ENCODE measurements at regions of chr3 and their contacts with region 1.

Region 1: DNA sequence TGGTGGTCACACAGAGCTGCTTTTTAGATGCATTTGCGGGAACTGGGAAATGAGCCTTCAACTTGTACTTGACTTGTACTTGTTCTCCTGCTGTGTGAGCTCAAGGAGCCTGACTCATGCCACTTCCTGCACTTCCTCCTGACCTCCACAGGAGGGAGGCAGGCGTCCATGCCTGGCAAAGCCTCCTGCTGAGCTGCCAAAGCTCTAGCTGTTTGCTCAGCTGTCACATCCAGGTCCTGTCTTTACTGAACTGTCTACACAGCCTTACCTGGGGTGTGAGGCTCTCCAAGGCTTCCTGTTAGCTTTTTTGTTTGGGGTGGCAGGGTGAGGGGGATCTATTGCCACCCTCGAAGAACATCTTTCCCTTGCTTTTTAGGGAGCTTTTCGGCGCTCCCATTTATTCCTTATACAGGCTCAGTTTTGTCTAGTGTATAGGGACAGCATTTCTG is 6.4 kb downstream of the THPO start:
- DNase-seq: peak; percentile 85
- ATAC-seq: peak; percentile 98
- H3K4me3 ChIP-seq: no peak overlapping the region
- H3K27ac ChIP-seq: no peak overlapping the region
- H3K4me1 ChIP-seq: peaks cover 20% of the 10 kb centered on the region
- H3K27me3 ChIP-seq: no peaks in the 10 kb centered on the region
- CTCF ChIP-seq: peak; percentile 93

Region 2: DNA sequence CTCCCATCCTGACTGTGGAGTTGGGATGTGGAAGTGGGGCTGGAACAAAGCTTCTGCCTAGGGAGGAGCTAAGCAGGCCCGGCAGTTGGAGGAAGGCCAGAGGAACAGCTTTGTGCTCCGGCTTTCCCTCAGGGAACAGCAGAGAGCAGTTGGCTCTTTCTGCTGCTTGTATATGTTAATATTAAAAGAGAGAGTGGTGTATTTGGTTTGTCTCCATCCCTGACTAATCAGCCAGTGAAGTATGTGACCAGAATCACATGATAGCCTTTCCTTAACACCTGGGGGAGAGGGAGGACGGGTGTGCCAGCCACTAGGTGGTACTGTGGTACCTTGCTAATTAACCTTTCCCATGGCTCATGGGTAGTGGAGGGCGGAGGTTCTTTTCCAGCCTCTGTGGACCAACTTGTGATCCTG is 226.5 kb before region 1 on chr3:
- intact Hi-C with region 1: no loop called
- DNase-seq: peak; percentile 66
- ATAC-seq: peak; percentile 90
- H3K4me3 ChIP-seq: no peak overlapping the region
- H3K27ac ChIP-seq: no peak overlapping the region
- H3K4me1 ChIP-seq: no peaks in the 10 kb centered on the region
- H3K27me3 ChIP-seq: no peaks in the 10 kb centered on the region
- CTCF ChIP-seq: peak; percentile 45

Region 3: GRCh38 chr3:184405075-184406030 is 33.8 kb after region 1 on chr3:
- intact Hi-C with region 1: no loop called
- DNase-seq: no peak
- ATAC-seq: peak; percentile 4
- H3K4me3 ChIP-seq: no peak overlapping the region
- H3K27ac ChIP-seq: no peak overlapping the region
- H3K4me1 ChIP-seq: no peaks in the 10 kb centered on the region
- H3K27me3 ChIP-seq: peaks cover 27% of the 10 kb centered on the region
- CTCF ChIP-seq: no peak

Region 4: GRCh38 chr3:184513276-184514170 is 141.9 kb after region 1 on chr3:
- intact Hi-C with region 1: loop called (anchors 10 kb)
- DNase-seq: peak; percentile 90
- ATAC-seq: peak; percentile 98
- H3K4me3 ChIP-seq: peak overlapping the region; percentile 46
- H3K27ac ChIP-seq: no peak overlapping the region
- H3K4me1 ChIP-seq: peaks cover 5% of the 10 kb centered on the region
- H3K27me3 ChIP-seq: peaks cover 44% of the 10 kb centered on the region
- CTCF ChIP-seq: peak; percentile 88